PC-3 (cell line): ENCODE measurements at regions of chr13 and their contacts with region 1.

Region 1: DNA sequence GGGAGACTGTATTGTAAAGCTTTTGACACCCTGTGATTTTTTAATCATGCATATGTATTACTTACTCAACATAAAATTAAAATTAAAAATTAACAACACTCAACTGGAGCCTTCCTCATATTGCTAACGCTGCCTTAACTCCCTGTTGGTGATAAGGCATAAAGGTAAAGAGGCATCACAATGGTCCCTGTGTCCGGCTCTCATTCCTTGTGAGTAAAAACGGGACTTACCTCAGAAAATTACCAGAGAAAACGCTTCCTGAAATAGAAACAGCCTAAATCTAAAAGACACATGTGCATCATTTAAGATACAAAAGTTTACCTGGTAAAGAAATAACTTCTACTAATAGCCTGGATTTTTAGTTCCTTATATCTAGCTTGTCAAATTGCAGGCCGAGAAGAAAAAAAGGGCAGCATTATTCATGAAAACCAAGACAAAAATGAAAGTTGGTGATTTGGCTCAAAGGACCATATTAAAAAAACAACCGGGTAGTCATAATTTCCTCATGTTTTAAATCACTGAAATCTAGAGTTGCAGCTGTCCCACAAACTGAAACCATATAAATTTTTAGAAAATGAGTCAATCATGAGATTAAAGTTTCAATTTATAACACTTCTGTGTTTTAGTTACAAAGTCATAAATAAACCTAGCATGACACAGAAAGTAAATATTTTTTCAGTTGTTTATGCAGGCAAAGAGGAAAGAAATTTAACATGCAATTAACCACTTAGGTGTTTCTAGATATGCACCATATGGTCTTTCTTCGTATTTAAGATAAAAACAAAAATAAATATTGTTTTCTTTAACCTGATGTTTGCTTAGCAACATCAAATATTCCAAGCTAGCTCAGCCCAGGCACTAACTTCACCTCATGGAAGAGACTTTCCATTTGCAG is 94.7 kb downstream of the MIPEP start:
- DNase-seq: peak; percentile 79
- ATAC-seq: peak; percentile 72
- H3K4me3 ChIP-seq: peak overlapping the region; percentile 52
- H3K27ac ChIP-seq: peak overlapping the region; percentile 95
- H3K4me1 ChIP-seq: peaks cover 36% of the 10 kb centered on the region
- H3K27me3 ChIP-seq: no peaks in the 10 kb centered on the region
- CTCF ChIP-seq: no peak

Region 2: DNA sequence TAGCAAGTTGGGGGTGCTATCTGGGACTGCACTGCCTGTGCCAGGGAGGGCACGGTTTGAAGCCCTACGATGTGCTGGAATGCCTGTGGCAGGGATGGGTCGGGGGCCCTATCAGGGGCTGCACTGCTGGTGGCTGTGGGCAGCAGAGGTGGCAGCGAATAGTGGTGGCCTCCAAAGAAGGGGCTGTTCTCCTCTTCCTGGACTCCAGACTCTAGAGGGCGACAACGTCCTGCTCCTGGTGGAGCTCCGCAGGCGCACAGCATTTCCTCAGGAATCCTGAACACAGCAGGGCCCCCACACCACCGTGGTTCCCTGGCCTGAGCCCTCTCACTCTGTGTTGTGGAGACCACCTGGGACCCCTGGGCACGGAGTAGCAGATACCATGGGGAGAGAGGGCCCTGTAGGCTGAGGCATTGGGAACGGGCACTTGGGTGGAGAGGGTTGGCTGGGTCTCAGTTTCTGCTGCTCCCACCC is 78.7 kb before region 1 on chr13:
- CTCF ChIA-PET with region 1: no interaction called
- POLR2A ChIA-PET with region 1: no interaction called
- intact Hi-C with region 1: loop called (anchors 2 kb)
- DNase-seq: peak; percentile 78
- ATAC-seq: peak; percentile 80
- H3K4me3 ChIP-seq: peak overlapping the region; percentile 60
- H3K27ac ChIP-seq: peak overlapping the region; percentile 30; the same call in 1 of the 2 replicates
- H3K4me1 ChIP-seq: peaks cover 23% of the 10 kb centered on the region
- H3K27me3 ChIP-seq: no peaks in the 10 kb centered on the region
- CTCF ChIP-seq: peak; percentile 77

Region 3: GRCh38 chr13:23752111-23753001 is 42.2 kb before region 1 on chr13:
- CTCF ChIA-PET with region 1: no interaction called
- POLR2A ChIA-PET with region 1: interaction called, 3 read pairs
- intact Hi-C with region 1: loop called (anchors 1 kb)
- DNase-seq: peak; percentile 35
- ATAC-seq: no peak
- H3K4me3 ChIP-seq: no peak overlapping the region
- H3K27ac ChIP-seq: peak overlapping the region; percentile 100
- H3K4me1 ChIP-seq: peaks cover 72% of the 10 kb centered on the region
- H3K27me3 ChIP-seq: no peaks in the 10 kb centered on the region
- CTCF ChIP-seq: no peak

Region 4: DNA sequence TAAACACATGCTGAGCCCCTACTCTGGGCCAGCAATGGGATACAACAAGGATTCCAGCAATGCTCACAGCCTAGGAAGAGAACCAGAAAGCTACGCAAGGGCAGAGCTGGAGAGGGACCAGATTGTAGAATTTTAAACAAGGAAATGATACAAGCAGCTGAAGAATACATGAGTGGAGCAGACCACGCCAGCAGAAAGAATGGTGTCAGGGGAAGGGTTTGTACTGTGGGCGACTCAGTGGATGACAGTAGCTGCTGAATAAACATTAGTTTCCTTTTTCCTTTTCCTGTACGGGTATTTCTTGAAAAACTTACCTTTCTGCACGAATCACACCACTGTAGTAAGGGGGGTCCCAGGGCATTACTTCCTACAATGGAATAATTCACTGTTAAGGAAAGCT is 64.0 kb after region 1 on chr13:
- CTCF ChIA-PET with region 1: no interaction called
- POLR2A ChIA-PET with region 1: no interaction called
- intact Hi-C with region 1: loop called (anchors 1 kb)
- DNase-seq: peak; percentile 41
- ATAC-seq: peak; percentile 48
- H3K4me3 ChIP-seq: peak overlapping the region; percentile 2; the same call in 1 of the 2 replicates
- H3K27ac ChIP-seq: peak overlapping the region; percentile 93
- H3K4me1 ChIP-seq: peaks cover 33% of the 10 kb centered on the region
- H3K27me3 ChIP-seq: no peaks in the 10 kb centered on the region
- CTCF ChIP-seq: no peak

Region 5: DNA sequence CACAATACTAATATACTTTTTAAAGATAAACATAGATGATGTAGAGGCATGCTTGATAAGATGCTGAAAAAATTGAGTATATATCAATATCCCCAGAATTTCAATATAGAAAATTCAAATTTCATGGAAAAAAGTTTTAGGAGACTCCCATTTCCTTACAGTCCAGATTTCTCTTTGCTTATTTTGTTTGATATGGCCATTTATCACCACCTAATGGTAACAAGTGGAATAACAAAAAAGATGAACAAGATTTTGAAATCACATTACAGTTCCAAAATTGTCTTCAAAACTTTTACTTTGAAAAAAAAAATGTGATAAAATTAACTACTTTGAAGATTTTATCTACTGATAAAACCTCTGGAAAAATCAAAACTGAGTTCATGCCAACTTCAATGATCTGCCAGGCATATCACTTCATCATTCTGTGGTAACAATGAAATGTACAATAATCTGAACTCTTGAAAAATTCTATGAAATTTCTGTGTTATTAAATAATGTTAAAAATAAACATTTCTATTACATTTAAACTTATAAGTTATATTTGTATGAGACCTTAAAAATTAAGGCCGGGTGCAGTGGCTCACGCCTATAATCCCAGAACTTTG is 77.2 kb after region 1 on chr13:
- CTCF ChIA-PET with region 1: no interaction called
- POLR2A ChIA-PET with region 1: interaction called, 16 read pairs
- intact Hi-C with region 1: loop called (anchors 1 kb)
- DNase-seq: peak; percentile 58
- ATAC-seq: no peak
- H3K4me3 ChIP-seq: no peak overlapping the region
- H3K27ac ChIP-seq: peak overlapping the region; percentile 62
- H3K4me1 ChIP-seq: peaks cover 44% of the 10 kb centered on the region
- H3K27me3 ChIP-seq: no peaks in the 10 kb centered on the region
- CTCF ChIP-seq: peak; percentile 74